Activated B cell treated with CpG ODN at 0.5 μM for 24 hours (primary cell): ENCODE measurements at regions of chr2 and their contacts with region 1.

Region 1: DNA sequence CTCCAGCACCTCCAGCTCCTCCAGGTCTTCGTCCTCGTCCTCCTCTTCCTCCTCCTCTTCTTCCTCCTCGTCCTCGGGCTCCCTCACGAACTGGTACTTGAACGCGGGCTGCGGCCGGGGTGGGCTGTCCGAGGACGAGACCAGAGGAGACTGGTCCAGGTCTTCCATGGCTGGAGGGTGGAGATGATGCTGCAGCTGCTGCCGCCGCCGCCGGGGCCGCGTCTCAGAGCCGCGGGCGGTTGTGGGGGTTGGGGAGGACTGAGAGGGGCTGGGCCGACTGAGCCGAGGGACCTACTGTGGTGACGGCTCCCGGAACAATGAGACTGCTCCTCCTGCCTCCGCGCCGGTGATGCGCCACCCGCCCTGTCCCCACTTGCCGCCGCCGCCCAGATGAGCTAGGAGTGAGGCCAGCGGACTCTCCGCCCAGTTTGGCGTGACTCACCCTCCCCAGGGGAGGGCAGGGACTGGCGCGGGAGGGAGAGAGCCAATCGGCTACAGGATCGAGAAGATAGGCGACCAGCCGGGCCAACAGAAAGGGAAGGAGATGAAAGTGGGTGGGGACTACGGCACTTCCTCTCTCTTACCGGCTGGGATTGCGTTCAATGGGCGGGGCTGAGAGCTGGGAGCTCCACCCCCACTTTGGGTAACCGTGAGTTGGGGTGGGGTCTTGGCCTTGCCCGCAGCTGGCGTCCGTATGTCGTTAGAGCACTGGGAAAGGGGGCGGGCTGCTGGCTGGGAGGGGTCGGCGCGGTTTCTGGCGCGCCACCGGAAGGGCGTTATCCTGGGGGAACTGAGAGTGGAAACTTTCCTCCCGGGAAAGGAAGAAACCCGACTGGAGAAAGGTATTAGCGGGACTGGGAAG is at the start of gene RTN4:
- DNase-seq: peak; percentile 98
- ATAC-seq: peak; percentile 86
- H3K4me3 Mint-ChIP-seq: peak within 1 kb of the TSS; percentile 96
- H3K27ac Mint-ChIP-seq: peak within 1 kb of the TSS; percentile 99
- H3K4me1 Mint-ChIP-seq: peaks cover 70% of the 10 kb centered on the region
- H3K27me3 Mint-ChIP-seq: no peaks in the 10 kb centered on the region
- CTCF ChIP-seq: no peak
- total RNA-seq, gene RTN4: 60.5 and 60.6 TPM in 2 replicates

Region 2: DNA sequence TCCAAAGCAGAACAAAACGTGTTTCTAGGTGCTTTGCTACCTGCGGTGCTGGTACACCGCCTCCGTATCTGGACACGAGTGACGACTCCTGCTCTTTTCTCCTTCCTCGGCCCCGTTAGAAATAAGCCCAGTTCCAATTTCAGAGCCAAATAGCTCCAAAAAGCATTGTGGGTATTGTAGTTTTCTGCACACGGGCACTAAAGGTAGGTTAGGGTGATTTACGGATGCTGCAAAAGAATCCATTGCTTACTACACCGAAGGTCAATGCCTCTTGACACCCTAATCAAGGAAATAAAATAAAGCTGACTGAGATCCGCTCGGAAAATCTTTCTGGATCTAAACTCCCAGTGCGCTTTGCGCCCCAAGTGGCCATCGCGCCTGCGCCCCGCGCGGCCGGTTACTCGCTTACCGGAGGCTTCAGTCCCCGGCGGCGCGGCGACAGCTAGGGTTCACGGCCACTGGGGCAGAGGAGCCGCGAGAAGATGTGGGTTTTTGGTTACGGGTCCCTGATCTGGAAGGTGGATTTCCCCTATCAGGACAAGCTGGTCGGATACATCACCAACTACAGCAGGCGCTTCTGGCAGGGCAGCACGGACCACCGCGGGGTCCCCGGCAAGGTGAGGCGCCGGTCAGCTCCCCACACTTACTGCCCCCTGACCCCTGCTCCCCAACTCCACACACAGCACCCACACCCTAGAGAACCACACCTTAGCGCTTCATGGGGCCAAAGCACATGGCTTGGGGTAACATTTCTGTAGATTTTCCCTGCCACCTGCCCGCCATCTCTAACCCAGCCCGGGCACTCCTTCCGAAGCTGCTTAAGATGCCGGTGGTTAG is 1282.7 kb before region 1 on chr2 and contains the start of gene CHAC2:
- CTCF ChIA-PET with region 1: no interaction called
- POLR2A ChIA-PET with region 1: interaction called, 3 read pairs
- intact Hi-C with region 1: loop called (anchors 5 kb)
- DNase-seq: peak; percentile 82
- ATAC-seq: peak; percentile 92
- H3K4me3 Mint-ChIP-seq: peak within 1 kb of the TSS; percentile 95
- H3K27ac Mint-ChIP-seq: peak within 1 kb of the TSS; percentile 99
- H3K4me1 Mint-ChIP-seq: peaks cover 21% of the 10 kb centered on the region
- H3K27me3 Mint-ChIP-seq: no peaks in the 10 kb centered on the region
- CTCF ChIP-seq: no peak
- total RNA-seq, gene CHAC2: 7.0 and 7.6 TPM in 2 replicates

Region 3: DNA sequence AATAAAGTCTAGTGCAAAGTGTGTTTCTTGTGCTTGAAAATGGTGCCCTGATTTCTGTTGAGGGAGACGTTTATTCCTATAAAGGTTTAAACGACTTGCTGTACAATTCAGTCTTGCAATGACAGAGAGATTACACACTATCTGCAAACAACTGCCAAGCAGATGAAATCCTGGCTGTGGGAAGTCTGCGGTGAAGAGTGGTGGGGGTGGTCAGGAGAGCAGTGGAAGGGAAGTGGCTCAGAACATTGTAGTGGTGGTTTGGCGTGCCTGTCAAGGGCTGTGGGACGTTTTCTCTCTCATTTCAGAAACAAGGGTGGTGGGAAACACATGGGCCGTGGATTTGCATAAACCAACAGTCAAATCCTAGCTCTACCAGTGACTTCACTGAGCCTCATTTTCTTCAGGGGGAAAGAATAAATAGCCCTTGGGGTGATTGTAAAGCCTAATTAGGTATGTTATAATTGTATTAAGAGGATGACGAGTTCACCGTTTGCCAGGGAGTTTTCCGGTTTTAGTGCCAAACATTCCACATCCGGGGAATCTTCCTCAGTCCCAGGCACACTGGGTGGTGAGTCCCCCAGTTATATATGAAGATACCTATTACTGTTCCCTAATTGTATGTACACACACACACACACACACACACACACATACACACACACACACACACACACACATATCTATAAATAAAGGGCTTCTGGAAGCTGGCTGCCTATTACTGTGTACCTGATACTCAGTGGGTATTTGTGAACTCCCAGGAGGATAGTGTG is 479.3 kb before region 1 on chr2:
- CTCF ChIA-PET with region 1: no interaction called
- POLR2A ChIA-PET with region 1: no interaction called
- intact Hi-C with region 1: loop called (anchors 5 kb)
- DNase-seq: no peak
- ATAC-seq: peak; percentile 49
- H3K4me3 Mint-ChIP-seq: peak overlapping the region; percentile 52
- H3K27ac Mint-ChIP-seq: peak overlapping the region; percentile 94
- H3K4me1 Mint-ChIP-seq: peaks cover 96% of the 10 kb centered on the region
- H3K27me3 Mint-ChIP-seq: no peaks in the 10 kb centered on the region
- CTCF ChIP-seq: no peak

Region 4: GRCh38 chr2:55026202-55026601 is 24.2 kb before region 1 on chr2:
- CTCF ChIA-PET with region 1: interaction called, 5 read pairs
- POLR2A ChIA-PET with region 1: interaction called, 20 read pairs
- intact Hi-C with region 1: no loop called
- DNase-seq: no peak
- ATAC-seq: no peak
- H3K4me3 Mint-ChIP-seq: no peak overlapping the region
- H3K27ac Mint-ChIP-seq: peak overlapping the region; percentile 33
- H3K4me1 Mint-ChIP-seq: peaks cover 10% of the 10 kb centered on the region
- H3K27me3 Mint-ChIP-seq: no peaks in the 10 kb centered on the region
- CTCF ChIP-seq: no peak

Region 5: DNA sequence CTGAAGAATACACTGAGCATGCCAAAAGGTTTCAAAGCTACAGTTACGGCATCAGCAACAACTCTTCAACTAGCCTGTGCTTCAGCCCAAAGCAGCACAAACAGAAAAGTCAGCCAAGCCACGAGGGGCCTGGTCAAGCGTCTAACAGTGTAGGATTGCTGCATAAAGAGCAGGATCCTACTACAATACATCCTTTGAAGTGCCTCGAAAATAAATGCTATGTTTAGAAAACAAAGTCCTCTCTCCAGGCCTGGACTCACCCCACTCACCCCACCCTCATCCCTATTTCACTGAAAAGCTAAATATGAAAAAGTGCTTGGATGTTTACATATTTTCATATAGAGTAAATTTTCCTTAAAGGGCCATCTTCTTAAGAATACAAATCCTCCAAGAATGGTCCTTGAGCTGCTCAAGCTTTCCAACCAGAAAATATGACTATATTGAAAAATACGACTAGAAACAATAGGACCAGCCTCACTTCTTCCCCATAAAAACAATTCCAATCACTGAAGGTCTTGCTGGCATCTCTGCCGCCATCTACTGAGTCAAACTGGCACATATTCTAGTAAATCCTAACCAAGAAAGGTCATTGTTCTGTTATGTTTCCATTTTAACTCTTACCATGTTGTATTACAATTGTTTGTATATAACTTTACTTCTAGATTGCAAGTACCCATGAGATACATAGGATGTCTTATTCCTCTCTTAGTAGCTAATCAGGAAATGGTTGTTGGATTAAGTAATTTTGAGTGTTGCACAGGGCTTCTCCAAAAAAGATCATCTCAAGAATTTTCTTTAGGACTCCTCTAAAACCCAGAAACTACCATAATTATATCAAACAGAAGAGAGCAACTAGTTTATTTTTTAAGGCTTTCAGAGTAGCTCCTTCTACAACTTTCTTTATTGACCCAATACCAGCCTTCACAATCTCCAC is 118.1 kb after region 1 on chr2:
- CTCF ChIA-PET with region 1: interaction called, 20 read pairs
- POLR2A ChIA-PET with region 1: interaction called, 6 read pairs
- intact Hi-C with region 1: loop called (anchors 1 kb)
- DNase-seq: no peak
- ATAC-seq: peak; percentile 45
- H3K4me3 Mint-ChIP-seq: no peak overlapping the region
- H3K27ac Mint-ChIP-seq: no peak overlapping the region
- H3K4me1 Mint-ChIP-seq: no peaks in the 10 kb centered on the region
- H3K27me3 Mint-ChIP-seq: no peaks in the 10 kb centered on the region
- CTCF ChIP-seq: no peak

Region 6: DNA sequence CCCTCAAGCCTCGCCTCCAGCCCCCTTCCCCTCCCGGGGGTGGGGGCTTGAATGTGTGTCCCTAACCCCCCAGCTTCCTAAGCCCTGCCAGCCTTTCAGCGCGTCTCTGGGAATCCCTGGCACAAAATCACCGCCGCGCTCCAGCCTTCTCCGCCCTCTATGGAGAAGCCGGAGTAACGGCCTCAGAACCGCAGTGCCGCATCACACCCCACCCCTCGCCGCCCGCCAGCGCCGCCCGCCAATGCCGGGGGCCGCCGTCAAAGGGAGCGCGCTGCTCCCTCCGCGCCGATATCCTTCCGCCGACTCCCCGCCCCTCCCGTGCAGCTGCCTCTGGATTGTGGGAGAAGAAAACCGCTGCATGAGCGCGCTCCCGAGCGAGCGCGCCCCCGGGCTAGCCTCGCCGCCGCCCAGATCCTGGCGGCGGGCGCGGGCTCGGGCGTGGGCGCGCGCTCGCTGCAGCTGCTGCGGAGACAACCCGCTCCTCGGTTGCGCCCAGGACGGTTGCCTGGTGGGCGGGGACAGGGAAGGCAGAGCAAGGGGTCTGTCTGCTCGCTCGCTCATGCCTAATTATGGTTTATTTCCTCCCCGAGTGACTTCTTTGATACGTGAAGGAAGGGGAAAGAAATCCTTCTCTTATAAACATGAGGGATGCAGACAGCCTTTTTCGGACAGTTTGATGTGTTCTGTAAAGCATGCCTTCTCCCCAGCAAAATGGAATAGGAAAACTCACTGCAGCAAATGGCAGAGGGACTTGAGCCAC is 369.5 kb after region 1 on chr2 and contains the start of gene CCDC88A:
- CTCF ChIA-PET with region 1: no interaction called
- POLR2A ChIA-PET with region 1: interaction called, 3 read pairs
- intact Hi-C with region 1: loop called (anchors 5 kb)
- DNase-seq: peak; percentile 86
- ATAC-seq: peak; percentile 87
- H3K4me3 Mint-ChIP-seq: peak within 1 kb of the TSS; percentile 95
- H3K27ac Mint-ChIP-seq: peak within 1 kb of the TSS; percentile 92
- H3K4me1 Mint-ChIP-seq: peaks cover 46% of the 10 kb centered on the region
- H3K27me3 Mint-ChIP-seq: no peaks in the 10 kb centered on the region
- CTCF ChIP-seq: no peak
- total RNA-seq, gene CCDC88A: 25.6 and 35.6 TPM in 2 replicates